GM12878 (cell line): ENCODE measurements at regions of chr1 and their contacts with region 1.

Region 1: GRCh38 chr1:90475631-90476030 is 241.5 kb downstream of the BARHL2 start:
- DNase-seq: no peak
- ATAC-seq: peak; percentile 75
- H3K4me3 ChIP-seq: no peak overlapping the region
- H3K27ac ChIP-seq: no peak overlapping the region
- H3K4me1 ChIP-seq: no peaks in the 10 kb centered on the region
- H3K27me3 ChIP-seq: no peaks in the 10 kb centered on the region
- CTCF ChIP-seq: peak; percentile 17 to 55 (median 51); a peak in 3 of 6 replicates
- EP300 ChIP-seq: no peak
- POLR2A ChIP-seq: no peak
- RAD21 ChIP-seq: 0 out of 2 replicates have a peak, but pooled peaks have one; percentile 22

Region 2: DNA sequence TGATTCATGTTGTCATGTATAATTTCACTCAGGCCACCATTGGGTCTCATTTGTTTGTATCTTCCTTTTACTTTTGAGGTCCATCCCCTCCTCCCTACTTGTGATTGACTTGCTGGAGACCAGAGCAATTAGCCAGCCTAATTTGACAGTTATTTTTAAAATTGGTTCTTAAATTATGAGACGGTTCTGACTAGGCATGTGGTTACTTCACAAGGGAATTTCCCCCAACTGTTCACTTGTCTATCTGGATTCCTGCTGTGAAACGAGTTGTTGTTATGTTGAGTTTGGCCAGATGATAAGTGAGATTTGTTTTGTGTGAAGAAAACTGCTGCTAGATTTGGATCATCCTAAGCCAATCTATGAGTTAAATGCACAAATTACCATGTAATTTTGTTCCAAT is 117.6 kb before region 1 on chr1:
- CTCF ChIA-PET with region 1: interaction called, 14 read pairs
- POLR2A ChIA-PET with region 1: no interaction called
- RAD21 ChIA-PET with region 1: interaction called, 10 read pairs
- SMC1A ChIA-PET with region 1: interaction called, 18 read pairs
- in situ Hi-C with region 1: no loop called
- intact Hi-C with region 1: no loop called
- DNase-seq: peak; percentile 42
- ATAC-seq: peak; percentile 91
- H3K4me3 ChIP-seq: no peak overlapping the region
- H3K27ac ChIP-seq: no peak overlapping the region
- H3K4me1 ChIP-seq: no peaks in the 10 kb centered on the region; the same call in 1 of the 2 replicates
- H3K27me3 ChIP-seq: no peaks in the 10 kb centered on the region
- CTCF ChIP-seq: no peak
- EP300 ChIP-seq: peak; percentile 46 to 83; a peak in 3 of 4 replicates
- POLR2A ChIP-seq: no peak
- RAD21 ChIP-seq: no peak

Region 3: DNA sequence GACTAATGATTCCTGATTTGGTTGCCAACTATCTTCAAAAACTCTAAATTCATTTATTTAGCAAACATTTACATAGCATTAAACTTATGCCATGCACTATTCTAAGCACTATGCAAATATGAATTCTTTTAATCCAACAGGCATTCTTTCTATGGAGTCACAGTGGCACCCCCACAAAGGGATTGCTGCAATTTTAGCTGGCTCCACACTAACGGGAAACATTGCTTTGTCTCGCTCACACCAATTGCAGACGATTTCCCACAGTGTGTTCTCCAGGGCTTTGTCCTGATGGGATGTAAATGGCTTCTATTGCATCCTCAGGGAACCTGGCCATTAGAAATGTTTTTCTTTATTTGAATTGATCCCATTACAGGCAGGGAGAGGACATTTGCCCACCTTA is 17.6 kb before region 1 on chr1:
- CTCF ChIA-PET with region 1: interaction called, 3 read pairs
- POLR2A ChIA-PET with region 1: no interaction called
- RAD21 ChIA-PET with region 1: interaction called, 4 read pairs
- SMC1A ChIA-PET with region 1: interaction called, 24 read pairs
- in situ Hi-C with region 1: no loop called
- intact Hi-C with region 1: no loop called
- DNase-seq: no peak
- ATAC-seq: no peak
- H3K4me3 ChIP-seq: no peak overlapping the region
- H3K27ac ChIP-seq: no peak overlapping the region
- H3K4me1 ChIP-seq: no peaks in the 10 kb centered on the region
- H3K27me3 ChIP-seq: no peaks in the 10 kb centered on the region
- CTCF ChIP-seq: no peak
- EP300 ChIP-seq: no peak
- POLR2A ChIP-seq: no peak
- RAD21 ChIP-seq: no peak

Region 4: DNA sequence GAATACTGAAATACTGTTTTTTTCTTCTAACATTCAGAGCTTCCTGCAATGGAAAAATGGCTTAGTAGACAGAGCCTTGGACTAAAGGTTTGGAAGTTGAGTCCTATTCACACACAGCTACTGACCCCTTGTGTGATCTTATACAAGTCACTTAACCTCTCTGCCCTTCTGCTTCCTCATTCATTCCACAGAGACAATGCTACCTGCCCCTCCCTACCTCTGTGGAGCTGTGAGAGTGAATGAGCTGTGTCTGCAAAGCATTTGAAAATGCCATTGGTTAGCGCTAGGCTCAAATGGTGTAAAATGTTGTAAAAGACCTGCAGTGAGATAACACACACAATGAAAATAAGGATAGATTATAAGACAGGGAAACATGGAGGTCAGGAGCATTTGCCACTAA is 27.1 kb after region 1 on chr1:
- CTCF ChIA-PET with region 1: interaction called, 19 read pairs
- POLR2A ChIA-PET with region 1: interaction called, 12 read pairs
- RAD21 ChIA-PET with region 1: interaction called, 55 read pairs
- SMC1A ChIA-PET with region 1: interaction called, 116 read pairs
- in situ Hi-C with region 1: no loop called
- intact Hi-C with region 1: no loop called
- DNase-seq: no peak
- ATAC-seq: peak; percentile 24; the same call in 2 of the 3 replicates
- H3K4me3 ChIP-seq: no peak overlapping the region
- H3K27ac ChIP-seq: no peak overlapping the region
- H3K4me1 ChIP-seq: no peaks in the 10 kb centered on the region
- H3K27me3 ChIP-seq: no peaks in the 10 kb centered on the region
- CTCF ChIP-seq: no peak
- EP300 ChIP-seq: no peak
- POLR2A ChIP-seq: no peak
- RAD21 ChIP-seq: no peak

Region 5: DNA sequence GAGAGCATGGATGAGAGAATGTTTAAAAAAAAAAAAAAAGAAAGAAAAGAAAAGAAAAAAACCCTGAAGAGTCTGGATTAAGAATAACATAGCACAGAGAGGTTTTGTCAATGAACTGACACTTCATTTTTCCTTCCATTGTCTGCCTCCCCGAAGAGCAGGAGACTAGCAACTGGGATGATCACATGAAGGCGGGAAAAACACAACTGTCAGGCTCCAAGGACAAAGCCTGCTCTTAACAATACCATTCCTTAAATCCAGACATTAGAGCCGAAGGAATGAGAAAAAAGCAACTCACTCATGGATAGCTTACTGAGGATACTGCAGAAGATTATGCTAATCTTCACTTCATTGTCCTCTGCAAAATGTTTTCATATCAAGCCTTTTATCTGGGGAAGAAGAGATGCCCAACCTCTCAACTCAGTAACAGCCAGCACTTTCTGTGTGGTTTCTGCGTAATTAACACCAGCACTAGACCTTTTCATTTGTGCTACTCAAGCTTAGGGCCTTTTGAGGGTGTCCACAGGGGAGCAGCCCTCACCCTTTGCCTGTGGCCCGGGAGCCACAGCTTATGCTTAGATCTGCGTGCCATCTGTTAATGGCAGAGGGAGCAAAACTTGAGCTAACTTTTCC is 59.1 kb after region 1 on chr1:
- CTCF ChIA-PET with region 1: interaction called, 52 read pairs
- POLR2A ChIA-PET with region 1: interaction called, 4 read pairs
- RAD21 ChIA-PET with region 1: interaction called, 56 read pairs
- SMC1A ChIA-PET with region 1: interaction called, 87 read pairs
- in situ Hi-C with region 1: no loop called
- intact Hi-C with region 1: no loop called
- DNase-seq: no peak
- ATAC-seq: peak; percentile 64
- H3K4me3 ChIP-seq: no peak overlapping the region
- H3K27ac ChIP-seq: no peak overlapping the region
- H3K4me1 ChIP-seq: no peaks in the 10 kb centered on the region
- H3K27me3 ChIP-seq: peaks cover 0 to 3% of the 10 kb centered on the region in 2 experiments; a peak in 1 of 4 replicates
- CTCF ChIP-seq: no peak; a peak in 1 of 6 replicates
- EP300 ChIP-seq: 0 out of 4 replicates have a peak, but pooled peaks of 1 of the 2 experiments have one; percentile 28
- POLR2A ChIP-seq: no peak
- RAD21 ChIP-seq: no peak

Region 6: DNA sequence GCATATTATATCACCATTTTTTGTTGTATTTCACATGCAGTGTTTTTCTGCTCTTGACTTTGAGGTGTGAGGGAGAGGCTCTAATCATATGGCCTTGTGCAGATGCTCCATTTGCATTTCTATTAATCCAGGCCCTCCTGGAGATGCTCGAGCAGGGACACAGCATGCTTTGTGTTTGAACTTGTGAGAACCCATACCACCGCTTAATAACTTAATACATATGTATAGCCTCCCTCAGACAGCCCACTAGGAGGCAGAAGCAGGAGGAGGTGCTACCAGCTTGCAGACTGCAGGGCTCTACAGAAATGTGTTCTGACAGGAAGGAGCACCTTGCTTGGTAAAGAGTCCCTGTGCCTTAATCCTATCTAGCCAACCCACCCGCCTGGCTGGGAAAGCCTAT is 86.3 kb after region 1 on chr1:
- CTCF ChIA-PET with region 1: interaction called, 8 read pairs
- POLR2A ChIA-PET with region 1: interaction called, 6 read pairs
- RAD21 ChIA-PET with region 1: interaction called, 20 read pairs
- SMC1A ChIA-PET with region 1: interaction called, 15 read pairs
- in situ Hi-C with region 1: no loop called
- intact Hi-C with region 1: no loop called
- DNase-seq: no peak
- ATAC-seq: peak; percentile 65
- H3K4me3 ChIP-seq: no peak overlapping the region
- H3K27ac ChIP-seq: no peak overlapping the region
- H3K4me1 ChIP-seq: no peaks in the 10 kb centered on the region
- H3K27me3 ChIP-seq: no peaks in the 10 kb centered on the region
- CTCF ChIP-seq: no peak
- EP300 ChIP-seq: no peak
- POLR2A ChIP-seq: no peak
- RAD21 ChIP-seq: no peak

Region 7: GRCh38 chr1:90687747-90688146 is 212.1 kb after region 1 on chr1:
- CTCF ChIA-PET with region 1: no interaction called
- POLR2A ChIA-PET with region 1: no interaction called
- RAD21 ChIA-PET with region 1: no interaction called
- SMC1A ChIA-PET with region 1: no interaction called
- in situ Hi-C with region 1: no loop called
- intact Hi-C with region 1: no loop called
- DNase-seq: no peak
- ATAC-seq: peak; percentile 44; the same call in 1 of the 3 replicates
- H3K4me3 ChIP-seq: no peak overlapping the region
- H3K27ac ChIP-seq: no peak overlapping the region
- H3K4me1 ChIP-seq: no peaks in the 10 kb centered on the region
- H3K27me3 ChIP-seq: no peaks in the 10 kb centered on the region
- CTCF ChIP-seq: no peak
- EP300 ChIP-seq: no peak
- POLR2A ChIP-seq: no peak
- RAD21 ChIP-seq: no peak

Region 8: GRCh38 chr1:90721210-90722194 is 245.9 kb after region 1 on chr1:
- CTCF ChIA-PET with region 1: interaction called, 40 read pairs
- POLR2A ChIA-PET with region 1: no interaction called
- RAD21 ChIA-PET with region 1: interaction called, 29 read pairs
- SMC1A ChIA-PET with region 1: interaction called, 20 read pairs
- in situ Hi-C with region 1: no loop called
- intact Hi-C with region 1: loop called (anchors 10 kb)
- DNase-seq: no peak
- ATAC-seq: peak; percentile 89
- H3K4me3 ChIP-seq: no peak overlapping the region
- H3K27ac ChIP-seq: no peak overlapping the region
- H3K4me1 ChIP-seq: no peaks in the 10 kb centered on the region
- H3K27me3 ChIP-seq: peaks cover 11 to 24% of the 10 kb centered on the region in 2 experiments
- CTCF ChIP-seq: peak; percentile 87 to 91 (median 91)
- EP300 ChIP-seq: no peak
- POLR2A ChIP-seq: no peak
- RAD21 ChIP-seq: peak; percentile 72